Right ventricle myocardium superior (tissue), 1 donor: ENCODE measurements at regions of chr7 and their contacts with region 1.

Region 1: GRCh38 chr7:104482362-104483037 is 154.1 kb downstream of the LHFPL3 start:
- DNase-seq: no peak
- ATAC-seq: no peak

Region 2: GRCh38 chr7:104328296-104328969 is 154.1 kb before region 1 on chr7 and contains the start of gene LHFPL3:
- intact Hi-C with region 1: no loop called
- DNase-seq: no peak
- ATAC-seq: no peak
- total RNA-seq, gene LHFPL3: not detected

Region 3: DNA sequence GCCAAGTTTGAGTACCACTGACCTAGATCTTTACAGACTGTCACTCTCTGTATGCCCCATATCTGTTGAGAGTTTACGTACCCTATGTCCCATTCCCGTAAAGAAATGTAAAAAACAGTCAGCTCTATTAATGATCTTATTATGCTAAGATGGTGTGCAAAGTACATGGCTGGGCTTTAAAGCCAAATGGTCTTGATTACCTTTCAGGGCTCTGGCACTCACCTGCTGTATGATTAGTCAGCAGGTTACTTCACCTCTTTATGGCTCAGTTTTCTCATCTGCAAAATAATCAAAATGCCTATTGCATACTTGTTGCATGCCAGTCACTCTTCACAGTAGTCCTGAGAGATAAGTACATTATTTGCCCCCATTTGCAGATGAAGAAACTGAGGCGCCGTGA is 99.9 kb before region 1 on chr7:
- intact Hi-C with region 1: loop called (anchors 5 kb)
- DNase-seq: no peak
- ATAC-seq: no peak